CD8-positive, alpha-beta T cell (primary cell): ENCODE measurements at regions of chr17 and their contacts with region 1.

Region 1: DNA sequence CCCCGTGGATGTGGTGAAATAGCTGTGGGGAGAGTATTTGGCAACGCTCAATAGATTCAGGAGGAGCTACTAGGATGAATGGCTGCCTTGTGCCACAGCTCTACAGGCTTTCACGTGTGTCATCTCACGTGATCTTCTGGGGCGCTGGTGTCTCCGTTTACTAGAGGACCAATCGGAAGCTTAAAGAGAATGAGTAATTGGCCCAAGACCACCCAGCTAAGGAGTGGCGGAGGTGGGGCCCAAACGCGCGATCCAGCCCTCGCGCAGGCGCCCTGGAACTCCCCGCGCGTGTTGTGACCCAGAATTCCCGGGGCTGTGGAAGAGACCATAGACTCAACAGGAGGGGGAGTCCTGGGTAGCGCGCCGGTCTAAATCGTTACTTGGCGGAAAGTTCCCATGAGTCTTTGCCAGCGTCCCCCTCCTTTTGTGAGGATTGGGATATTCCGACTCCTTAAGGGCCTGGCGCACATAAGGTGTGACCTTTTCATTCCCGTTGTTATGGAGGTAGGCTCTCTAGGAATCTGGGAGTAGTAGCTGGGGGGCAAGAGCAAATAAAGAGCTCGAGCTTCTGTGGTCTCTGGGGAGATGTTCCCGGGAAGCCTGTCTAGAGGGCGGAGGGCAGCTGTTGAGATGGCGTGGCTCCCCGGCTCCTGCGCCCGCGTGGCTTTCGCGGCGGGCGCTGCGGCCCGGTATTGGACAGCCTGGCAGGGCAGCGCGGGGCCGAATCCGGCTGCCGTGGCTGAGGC is 23.4 kb downstream of the TRPV2 start:
- DNase-seq: peak; percentile 89 to 99 (median 93)
- ATAC-seq: peak; percentile 80
- H3K4me3 ChIP-seq: peak overlapping the region; percentile 88 to 91
- H3K4me3 Mint-ChIP-seq: peak overlapping the region; percentile 99
- H3K27ac ChIP-seq: peak overlapping the region; percentile 88 to 90
- H3K27ac Mint-ChIP-seq: peak overlapping the region; percentile 99
- H3K4me1 ChIP-seq: peaks cover 34% of the 10 kb centered on the region
- H3K4me1 Mint-ChIP-seq: peaks cover 46% of the 10 kb centered on the region
- H3K27me3 ChIP-seq: no peaks in the 10 kb centered on the region
- H3K27me3 Mint-ChIP-seq: no peaks in the 10 kb centered on the region
- CTCF ChIP-seq: no peak

Region 2: DNA sequence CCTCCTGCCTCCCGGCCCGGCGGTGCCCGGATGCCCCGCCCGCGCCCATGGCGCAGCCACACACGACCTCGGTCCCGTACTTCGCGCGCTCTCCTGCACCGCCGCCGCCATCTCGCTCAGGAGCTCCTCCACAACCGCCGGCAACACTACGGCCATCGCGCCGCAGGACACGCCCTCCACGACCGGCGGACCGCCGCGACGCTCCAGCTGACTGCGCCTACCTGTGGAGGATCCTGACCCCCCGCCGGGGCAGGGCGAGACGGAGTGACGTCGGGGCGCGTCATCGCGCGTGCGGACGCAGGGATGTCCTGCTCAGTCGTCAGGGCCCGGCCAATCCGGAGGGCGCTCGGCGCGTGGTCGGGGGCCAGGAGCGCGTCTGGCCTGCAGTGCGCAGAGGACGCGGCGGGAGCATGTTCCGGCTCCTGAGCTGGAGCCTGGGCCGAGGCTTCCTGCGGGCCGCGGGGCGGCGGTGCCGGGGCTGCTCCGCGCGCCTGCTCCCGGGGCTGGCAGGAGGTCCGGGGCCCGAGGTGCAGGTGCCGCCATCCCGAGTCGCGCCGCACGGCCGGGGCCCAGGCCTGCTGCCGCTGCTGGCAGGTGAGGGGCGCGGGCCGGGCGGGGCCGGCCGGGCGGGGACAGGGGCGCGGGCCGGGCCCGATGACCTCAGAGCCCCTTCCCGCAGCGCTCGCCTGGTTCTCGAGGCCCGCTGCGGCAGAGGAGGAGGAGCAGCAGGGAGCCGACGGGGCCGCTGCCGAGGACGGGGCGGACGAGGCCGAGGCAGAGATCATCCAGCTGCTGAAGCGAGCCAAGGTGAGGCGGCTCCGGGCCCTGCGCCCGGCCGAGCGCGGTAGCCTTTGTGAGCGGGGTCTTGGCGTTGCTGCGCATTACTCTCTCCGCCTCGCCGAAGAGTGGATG is 439.0 kb before region 1 on chr17 and contains the starts of genes TTC19 and ZSWIM7:
- CTCF ChIA-PET with region 1: no interaction called
- POLR2A ChIA-PET with region 1: no interaction called
- intact Hi-C with region 1: loop called in 1 of 2 experiments (anchors 2 kb)
- DNase-seq: peak; percentile 83 to 96 (median 94)
- ATAC-seq: peak; percentile 81
- H3K4me3 ChIP-seq: peak within 1 kb of the TSS; percentile 66 to 93
- H3K4me3 Mint-ChIP-seq: peak within 1 kb of the TSS; percentile 94
- H3K27ac ChIP-seq: peak within 1 kb of the TSS; percentile 89 to 93
- H3K27ac Mint-ChIP-seq: peak within 1 kb of the TSS; percentile 98
- H3K4me1 ChIP-seq: peaks cover 21% of the 10 kb centered on the region
- H3K4me1 Mint-ChIP-seq: peaks cover 38% of the 10 kb centered on the region
- H3K27me3 ChIP-seq: no peaks in the 10 kb centered on the region
- H3K27me3 Mint-ChIP-seq: no peaks in the 10 kb centered on the region
- CTCF ChIP-seq: no peak
- total RNA-seq, gene TTC19: 63.5 to 71.9 TPM
- total RNA-seq, gene ZSWIM7: 10.3 to 10.8 TPM

Region 3: GRCh38 chr17:16285957-16286640 is 152.6 kb before region 1 on chr17:
- CTCF ChIA-PET with region 1: no interaction called
- POLR2A ChIA-PET with region 1: no interaction called
- intact Hi-C with region 1: loop called (anchors 5 kb)
- DNase-seq: peak; percentile 48 to 91 (median 77)
- ATAC-seq: peak; percentile 93
- H3K4me3 ChIP-seq: peak overlapping the region; percentile 19 to 27
- H3K4me3 Mint-ChIP-seq: peak overlapping the region; percentile 75
- H3K27ac ChIP-seq: peak overlapping the region; percentile 60 to 86
- H3K27ac Mint-ChIP-seq: peak overlapping the region; percentile 99
- H3K4me1 ChIP-seq: peaks cover 49% of the 10 kb centered on the region
- H3K4me1 Mint-ChIP-seq: peaks cover 53% of the 10 kb centered on the region
- H3K27me3 ChIP-seq: no peaks in the 10 kb centered on the region
- H3K27me3 Mint-ChIP-seq: no peaks in the 10 kb centered on the region
- CTCF ChIP-seq: peak; percentile 37

Region 4: GRCh38 chr17:16380640-16381495 is 57.9 kb before region 1 on chr17 and contains the start of gene UBB:
- CTCF ChIA-PET with region 1: interaction called, 6 read pairs
- POLR2A ChIA-PET with region 1: interaction called, 30 read pairs
- intact Hi-C with region 1: loop called (anchors 1 kb)
- DNase-seq: peak; percentile 88 to 99 (median 94)
- ATAC-seq: peak; percentile 91
- H3K4me3 ChIP-seq: peak within 1 kb of the TSS; percentile 77 to 79
- H3K4me3 Mint-ChIP-seq: peak within 1 kb of the TSS; percentile 85
- H3K27ac ChIP-seq: peak within 1 kb of the TSS; percentile 89 to 99
- H3K27ac Mint-ChIP-seq: peak within 1 kb of the TSS; percentile 96
- H3K4me1 ChIP-seq: peaks cover 29% of the 10 kb centered on the region
- H3K4me1 Mint-ChIP-seq: peaks cover 36% of the 10 kb centered on the region
- H3K27me3 ChIP-seq: no peaks in the 10 kb centered on the region
- H3K27me3 Mint-ChIP-seq: no peaks in the 10 kb centered on the region
- CTCF ChIP-seq: no peak
- total RNA-seq, gene UBB: 829 to 863 TPM

Region 5: DNA sequence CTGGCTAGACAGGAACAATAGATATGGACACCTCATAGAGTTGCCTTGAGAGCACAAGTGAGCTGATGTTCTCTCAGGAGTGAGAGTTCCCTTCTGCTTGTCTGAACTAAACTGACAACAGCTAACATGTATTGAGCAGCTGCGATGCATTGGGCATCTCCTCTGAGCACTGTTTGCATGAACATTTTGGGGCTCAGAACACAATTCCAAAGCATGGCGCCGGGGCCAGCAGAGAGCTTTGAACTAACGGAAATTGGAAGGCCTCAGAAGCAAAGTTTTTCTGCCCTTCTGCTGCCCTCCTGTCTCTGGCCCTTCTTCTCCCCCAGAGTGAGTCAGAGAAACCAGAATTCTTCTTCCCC is 14.7 kb after region 1 on chr17:
- CTCF ChIA-PET with region 1: interaction called, 65 read pairs
- POLR2A ChIA-PET with region 1: interaction called, 14 read pairs
- intact Hi-C with region 1: no loop called
- DNase-seq: no peak
- ATAC-seq: no peak
- H3K4me3 ChIP-seq: no peak overlapping the region
- H3K4me3 Mint-ChIP-seq: no peak overlapping the region
- H3K27ac ChIP-seq: no peak overlapping the region
- H3K27ac Mint-ChIP-seq: peak overlapping the region; percentile 55
- H3K4me1 ChIP-seq: no peaks in the 10 kb centered on the region
- H3K4me1 Mint-ChIP-seq: peaks cover 11% of the 10 kb centered on the region
- H3K27me3 ChIP-seq: no peaks in the 10 kb centered on the region
- H3K27me3 Mint-ChIP-seq: no peaks in the 10 kb centered on the region
- CTCF ChIP-seq: no peak

Region 6: GRCh38 chr17:16653209-16654041 is 214.7 kb after region 1 on chr17 and contains the start of gene ZNF624:
- CTCF ChIA-PET with region 1: no interaction called
- POLR2A ChIA-PET with region 1: no interaction called
- intact Hi-C with region 1: no loop called
- DNase-seq: peak; percentile 68 to 93 (median 85)
- ATAC-seq: peak; percentile 95
- H3K4me3 ChIP-seq: peak within 1 kb of the TSS; percentile 76 to 94
- H3K4me3 Mint-ChIP-seq: peak within 1 kb of the TSS; percentile 83
- H3K27ac ChIP-seq: peak within 1 kb of the TSS; percentile 22 to 62
- H3K27ac Mint-ChIP-seq: peak within 1 kb of the TSS; percentile 79
- H3K4me1 ChIP-seq: peaks cover 13% of the 10 kb centered on the region
- H3K4me1 Mint-ChIP-seq: peaks cover 24% of the 10 kb centered on the region
- H3K27me3 ChIP-seq: no peaks in the 10 kb centered on the region
- H3K27me3 Mint-ChIP-seq: peaks cover 11% of the 10 kb centered on the region
- CTCF ChIP-seq: no peak
- total RNA-seq, gene ZNF624: 3.2 to 3.4 TPM

Region 7: GRCh38 chr17:18038861-18039534 is 1600.3 kb after region 1 on chr17 and contains the starts of genes ATPAF2 and GID4:
- CTCF ChIA-PET with region 1: no interaction called
- POLR2A ChIA-PET with region 1: no interaction called
- intact Hi-C with region 1: loop called in 1 of 2 experiments (anchors 2 kb)
- DNase-seq: peak; percentile 99 to 100 (median 100)
- ATAC-seq: peak; percentile 90
- H3K4me3 ChIP-seq: peak within 1 kb of the TSS; percentile 85 to 92
- H3K4me3 Mint-ChIP-seq: peak within 1 kb of the TSS; percentile 92
- H3K27ac ChIP-seq: peak within 1 kb of the TSS; percentile 63 to 84
- H3K27ac Mint-ChIP-seq: peak within 1 kb of the TSS; percentile 91
- H3K4me1 ChIP-seq: peaks cover 34% of the 10 kb centered on the region
- H3K4me1 Mint-ChIP-seq: peaks cover 56% of the 10 kb centered on the region
- H3K27me3 ChIP-seq: no peaks in the 10 kb centered on the region
- H3K27me3 Mint-ChIP-seq: no peaks in the 10 kb centered on the region
- CTCF ChIP-seq: no peak
- total RNA-seq, gene ATPAF2: 16.8 to 24.5 TPM
- total RNA-seq, gene GID4: 2.7 to 5.0 TPM